CD8-positive, alpha-beta memory T cell (primary cell): ENCODE measurements at regions of chr4 and their contacts with region 1.

Region 1: GRCh38 chr4:38782452-38783108 is at the start of gene TLR10:
- DNase-seq: peak in 4 of 5 donors; percentile 11 to 52 (median 32)
- H3K4me3 ChIP-seq: no peak within 1 kb of the TSS
- H3K4me3 Mint-ChIP-seq: peak within 1 kb of the TSS in 1 of 7 donors; percentile 24
- H3K27ac ChIP-seq: no peak within 1 kb of the TSS
- H3K27ac Mint-ChIP-seq: peak within 1 kb of the TSS in 1 of 8 donors; percentile 13
- H3K4me1 ChIP-seq: peaks cover 6% of the 10 kb centered on the region
- H3K4me1 Mint-ChIP-seq: peaks cover 3 to 6% (median 4%) of the 10 kb centered on the region in 3 donors
- H3K27me3 ChIP-seq: no peaks in the 10 kb centered on the region
- H3K27me3 Mint-ChIP-seq: peaks cover 2 to 8% of the 10 kb centered on the region in 2 donors
- total RNA-seq, gene TLR10: not detected

Region 2: GRCh38 chr4:38759113-38759789 is 23.3 kb before region 1 on chr4:
- CTCF ChIA-PET with region 1: interaction called, 33 read pairs
- POLR2A ChIA-PET with region 1: no interaction called
- DNase-seq: peak in 4 of 5 donors; percentile 13 to 68 (median 54)
- H3K4me3 ChIP-seq: no peak overlapping the region
- H3K4me3 Mint-ChIP-seq: no peak overlapping the region
- H3K27ac ChIP-seq: no peak overlapping the region
- H3K27ac Mint-ChIP-seq: no peak overlapping the region
- H3K4me1 ChIP-seq: no peaks in the 10 kb centered on the region
- H3K4me1 Mint-ChIP-seq: peaks cover 4 to 10% (median 8%) of the 10 kb centered on the region in 3 donors
- H3K27me3 ChIP-seq: no peaks in the 10 kb centered on the region
- H3K27me3 Mint-ChIP-seq: peaks cover 0 to 11% of the 10 kb centered on the region in 2 donors

Region 3: GRCh38 chr4:38804654-38805295 is 22.2 kb after region 1 on chr4 and contains the start of gene TLR1:
- CTCF ChIA-PET with region 1: interaction called, 17 read pairs
- POLR2A ChIA-PET with region 1: no interaction called
- DNase-seq: peak in 2 of 5 donors; percentile 47 to 57
- H3K4me3 ChIP-seq: peak within 1 kb of the TSS; percentile 61
- H3K4me3 Mint-ChIP-seq: peak within 1 kb of the TSS; percentile 83 to 92 (median 87)
- H3K27ac ChIP-seq: no peak within 1 kb of the TSS
- H3K27ac Mint-ChIP-seq: peak within 1 kb of the TSS; percentile 36 to 96 (median 93)
- H3K4me1 ChIP-seq: peaks cover 8% of the 10 kb centered on the region
- H3K4me1 Mint-ChIP-seq: peaks cover 31 to 44% (median 36%) of the 10 kb centered on the region in 3 donors
- H3K27me3 ChIP-seq: no peaks in the 10 kb centered on the region
- H3K27me3 Mint-ChIP-seq: no peaks in the 10 kb centered on the region
- total RNA-seq, gene TLR1: 1.3 to 2.1 TPM

Region 4: GRCh38 chr4:38930204-38930603 is 147.6 kb after region 1 on chr4:
- CTCF ChIA-PET with region 1: no interaction called
- POLR2A ChIA-PET with region 1: no interaction called
- DNase-seq: no peak
- H3K4me3 ChIP-seq: no peak overlapping the region
- H3K4me3 Mint-ChIP-seq: no peak overlapping the region
- H3K27ac ChIP-seq: no peak overlapping the region
- H3K27ac Mint-ChIP-seq: no peak overlapping the region
- H3K4me1 ChIP-seq: no peaks in the 10 kb centered on the region
- H3K4me1 Mint-ChIP-seq: no peaks in the 10 kb centered on the region
- H3K27me3 ChIP-seq: no peaks in the 10 kb centered on the region
- H3K27me3 Mint-ChIP-seq: peaks cover 0 to 10% of the 10 kb centered on the region in 2 donors